ENCODE measurements at regions of chr15 and their contacts with region 1.

Region 1: DNA sequence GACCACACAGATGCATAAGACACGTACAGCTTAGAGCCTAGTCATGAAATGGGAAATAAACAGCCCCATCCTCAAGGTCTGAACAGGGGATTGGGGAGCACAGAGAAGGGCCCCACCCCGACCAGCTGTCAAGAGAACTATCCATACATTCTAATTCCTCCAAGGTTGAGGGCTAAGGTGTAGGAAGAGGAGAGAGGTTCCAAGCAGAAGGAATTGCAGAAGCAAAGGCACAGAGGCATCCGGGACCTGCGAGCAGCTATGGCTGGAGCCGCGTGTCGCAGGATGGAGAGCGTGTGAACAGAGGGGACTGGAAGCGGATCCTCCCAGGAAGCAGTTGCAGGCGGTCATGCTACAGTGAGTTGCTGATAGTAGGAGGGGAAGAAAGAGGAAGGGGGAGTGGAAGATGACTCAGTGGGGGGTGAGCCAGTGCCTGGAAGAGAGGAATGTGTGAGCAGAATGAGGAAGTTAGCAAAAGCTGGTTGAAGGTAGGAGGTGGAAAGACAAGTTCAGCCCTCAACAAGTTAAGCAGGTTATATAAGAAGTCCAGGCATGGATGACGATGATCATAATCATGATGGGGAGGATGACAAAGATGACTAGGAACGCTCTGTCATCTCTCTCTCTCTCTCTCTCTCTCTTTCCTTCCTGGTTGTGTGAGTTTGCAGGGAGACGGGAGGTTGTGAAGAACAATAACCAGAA is 89.7 kb downstream of the LIPC start:
- DNase-seq: peak; percentile 98 to 99 (median 98)
- H3K4me3 ChIP-seq: peak overlapping the region in 2 of 3 experiments; percentile 20 to 39
- H3K4me3 Mint-ChIP-seq: peak overlapping the region; percentile 42 to 82
- H3K27ac ChIP-seq: peak overlapping the region; percentile 95 to 99
- H3K27ac Mint-ChIP-seq: peak overlapping the region; percentile 94 to 98 (median 96)
- H3K4me1 ChIP-seq: peaks cover 96 to 99% of the 10 kb centered on the region in 2 donors
- H3K4me1 Mint-ChIP-seq: peaks cover 97% of the 10 kb centered on the region
- H3K27me3 ChIP-seq: no peaks in the 10 kb centered on the region
- H3K27me3 Mint-ChIP-seq: peaks cover 0 to 3% (median 0%) of the 10 kb centered on the region in 3 donors
- CTCF ChIP-seq: no peak

Region 2: DNA sequence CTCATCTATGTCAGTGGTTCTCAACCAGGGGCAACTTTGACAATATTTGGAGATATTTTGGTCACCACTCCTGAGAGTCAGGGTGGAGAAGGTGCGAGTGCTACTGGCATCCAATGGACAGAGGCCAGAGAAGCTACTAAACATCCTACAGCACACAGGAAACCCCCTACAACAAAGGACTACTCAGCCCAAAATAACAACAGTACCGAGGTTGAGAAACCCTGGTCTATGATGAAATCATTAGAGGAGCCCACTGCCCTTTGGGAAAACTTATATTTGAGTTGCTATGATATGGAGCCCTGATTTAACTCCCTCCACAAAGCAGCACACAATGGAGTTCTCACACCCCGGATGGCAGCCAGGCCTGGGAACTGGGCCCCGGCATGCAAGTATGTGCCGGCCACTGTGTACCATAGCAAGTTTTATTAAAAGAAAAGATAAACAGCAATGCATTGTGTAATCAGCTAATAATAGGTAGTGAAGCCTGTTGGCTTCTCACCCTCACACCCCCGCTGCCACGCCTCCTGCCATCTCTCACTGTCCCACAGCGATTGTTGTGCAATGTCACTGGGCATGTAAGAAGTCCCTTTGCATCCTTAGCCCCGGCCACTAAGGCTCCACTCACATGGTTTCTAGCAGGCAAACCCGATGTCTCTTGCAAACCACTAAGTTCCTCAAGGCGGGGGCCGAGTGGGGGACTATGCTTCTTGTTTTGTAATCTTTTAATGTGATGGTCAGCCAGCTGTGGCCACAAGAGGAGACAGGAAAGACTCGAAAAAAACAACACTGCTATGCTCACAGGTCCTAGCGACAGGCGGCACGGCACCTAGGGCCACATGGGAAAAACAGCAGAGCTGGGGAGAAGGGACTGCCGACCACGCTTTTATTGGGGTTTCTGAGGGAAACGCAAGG is 273.3 kb before region 1 on chr15:
- intact Hi-C with region 1: loop called in 1 of 2 experiments (anchors 10 kb)
- DNase-seq: peak; percentile 96 to 99 (median 97)
- H3K4me3 ChIP-seq: peak overlapping the region in 1 of 3 experiments; percentile 49
- H3K4me3 Mint-ChIP-seq: peak overlapping the region; percentile 47 to 76
- H3K27ac ChIP-seq: peak overlapping the region; percentile 92 to 97
- H3K27ac Mint-ChIP-seq: peak overlapping the region; percentile 89 to 97 (median 95)
- H3K4me1 ChIP-seq: peaks cover 79 to 85% of the 10 kb centered on the region in 2 donors
- H3K4me1 Mint-ChIP-seq: peaks cover 96% of the 10 kb centered on the region
- H3K27me3 ChIP-seq: no peaks in the 10 kb centered on the region
- H3K27me3 Mint-ChIP-seq: peaks cover 0 to 4% (median 0%) of the 10 kb centered on the region in 3 donors
- CTCF ChIP-seq: no peak

Region 3: DNA sequence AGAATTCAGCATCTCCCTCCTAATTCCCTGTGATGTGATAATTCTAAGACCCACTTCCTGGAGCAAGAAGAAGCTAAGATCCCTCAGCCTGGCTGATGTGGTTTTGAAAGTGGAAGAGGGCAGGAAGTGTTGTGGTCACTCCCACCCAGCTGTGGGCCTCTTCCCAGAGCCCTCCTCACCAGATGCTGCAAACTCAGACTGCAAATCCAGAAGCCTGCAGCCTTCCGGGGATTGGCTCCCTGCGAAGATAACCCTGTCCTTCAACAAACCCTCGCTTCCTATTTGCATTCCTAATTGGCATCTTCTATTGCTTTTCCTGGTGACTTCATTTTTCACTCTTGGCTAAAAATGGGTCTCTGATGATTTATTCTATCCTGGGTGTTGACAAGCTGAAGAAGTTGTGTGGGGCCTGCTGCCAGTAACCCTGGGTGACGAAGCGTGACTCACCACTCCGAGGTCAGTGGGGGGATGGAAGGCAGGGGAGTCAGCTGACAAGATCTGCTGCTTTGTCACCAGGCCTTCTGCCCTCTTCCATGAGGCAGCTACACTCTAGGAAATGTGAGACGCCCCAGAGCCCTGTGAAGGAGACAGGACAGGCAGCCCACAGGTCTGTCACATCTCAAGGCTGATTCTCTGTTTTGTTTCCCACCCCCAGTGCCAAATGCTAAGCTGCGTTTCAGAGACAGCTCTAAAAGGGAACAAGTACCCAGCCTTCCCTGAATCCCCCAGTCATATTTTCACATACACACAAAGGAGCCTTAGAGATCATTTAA is 189.4 kb before region 1 on chr15:
- intact Hi-C with region 1: loop called (anchors 5 kb)
- DNase-seq: peak; percentile 98 to 99 (median 99)
- H3K4me3 ChIP-seq: peak overlapping the region in 2 of 3 experiments; percentile 13 to 61
- H3K4me3 Mint-ChIP-seq: peak overlapping the region; percentile 55 to 89
- H3K27ac ChIP-seq: peak overlapping the region; percentile 99 to 100
- H3K27ac Mint-ChIP-seq: peak overlapping the region; percentile 99 to 100 (median 100)
- H3K4me1 ChIP-seq: peaks cover 50 to 58% of the 10 kb centered on the region in 2 donors
- H3K4me1 Mint-ChIP-seq: peaks cover 56% of the 10 kb centered on the region
- H3K27me3 ChIP-seq: no peaks in the 10 kb centered on the region
- H3K27me3 Mint-ChIP-seq: peaks cover 0 to 7% (median 0%) of the 10 kb centered on the region in 3 donors
- CTCF ChIP-seq: no peak

Region 4: DNA sequence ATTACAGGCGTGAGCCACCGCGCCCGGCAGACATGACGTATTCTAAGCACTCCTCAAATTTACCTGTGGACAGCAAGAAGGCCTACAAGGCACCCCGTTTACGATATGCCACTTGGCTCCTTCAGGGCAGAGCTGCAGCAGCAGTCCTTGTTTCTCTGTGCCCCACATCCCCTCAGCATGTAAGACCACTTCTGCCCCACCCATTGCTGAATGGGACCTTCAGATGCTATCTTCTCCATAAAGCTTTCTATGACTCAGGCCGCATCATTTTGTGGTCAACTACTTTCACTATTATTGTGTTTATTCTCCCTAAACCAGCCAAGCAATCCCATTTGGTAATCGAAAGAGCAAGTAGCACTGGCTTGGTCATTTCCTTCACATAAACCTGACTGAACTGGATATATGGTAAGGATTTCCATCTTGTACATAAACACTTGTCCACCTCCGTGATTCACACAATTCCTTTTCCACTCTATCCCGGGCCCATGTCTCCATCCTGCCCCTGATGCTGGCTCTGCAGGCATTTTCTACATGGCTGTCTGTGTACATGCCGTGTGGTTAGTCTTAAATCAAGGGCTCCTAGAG is 64.0 kb before region 1 on chr15:
- intact Hi-C with region 1: loop called in 1 of 2 experiments (anchors 5 kb)
- DNase-seq: peak in 2 of 3 donors; percentile 14 to 67
- H3K4me3 ChIP-seq: no peak overlapping the region
- H3K4me3 Mint-ChIP-seq: no peak overlapping the region
- H3K27ac ChIP-seq: no peak overlapping the region
- H3K27ac Mint-ChIP-seq: peak overlapping the region in 2 of 7 donors; percentile 22 to 51
- H3K4me1 ChIP-seq: peaks cover 23 to 32% of the 10 kb centered on the region in 2 donors
- H3K4me1 Mint-ChIP-seq: peaks cover 36% of the 10 kb centered on the region
- H3K27me3 ChIP-seq: no peaks in the 10 kb centered on the region
- H3K27me3 Mint-ChIP-seq: peaks cover 0 to 2% (median 0%) of the 10 kb centered on the region in 3 donors
- CTCF ChIP-seq: no peak

Region 5: GRCh38 chr15:58749532-58750337 is 228.3 kb after region 1 on chr15 and contains the start of gene ADAM10:
- intact Hi-C with region 1: loop called in 1 of 2 experiments (anchors 10 kb)
- DNase-seq: peak; percentile 99
- H3K4me3 ChIP-seq: peak within 1 kb of the TSS; percentile 61 to 82 (median 82)
- H3K4me3 Mint-ChIP-seq: peak within 1 kb of the TSS; percentile 97 to 98
- H3K27ac ChIP-seq: peak within 1 kb of the TSS; percentile 83 to 96
- H3K27ac Mint-ChIP-seq: peak within 1 kb of the TSS; percentile 95 to 98 (median 98)
- H3K4me1 ChIP-seq: peaks cover 27 to 36% of the 10 kb centered on the region in 2 donors
- H3K4me1 Mint-ChIP-seq: peaks cover 34% of the 10 kb centered on the region
- H3K27me3 ChIP-seq: no peaks in the 10 kb centered on the region
- H3K27me3 Mint-ChIP-seq: peaks cover 0 to 3% (median 0%) of the 10 kb centered on the region in 3 donors
- CTCF ChIP-seq: no peak
- polyA plus RNA-seq, gene ADAM10: 66.0 to 269 (median 149) TPM